ENCODE measurements at regions of chr13 and their contacts with region 1.

Region 1: DNA sequence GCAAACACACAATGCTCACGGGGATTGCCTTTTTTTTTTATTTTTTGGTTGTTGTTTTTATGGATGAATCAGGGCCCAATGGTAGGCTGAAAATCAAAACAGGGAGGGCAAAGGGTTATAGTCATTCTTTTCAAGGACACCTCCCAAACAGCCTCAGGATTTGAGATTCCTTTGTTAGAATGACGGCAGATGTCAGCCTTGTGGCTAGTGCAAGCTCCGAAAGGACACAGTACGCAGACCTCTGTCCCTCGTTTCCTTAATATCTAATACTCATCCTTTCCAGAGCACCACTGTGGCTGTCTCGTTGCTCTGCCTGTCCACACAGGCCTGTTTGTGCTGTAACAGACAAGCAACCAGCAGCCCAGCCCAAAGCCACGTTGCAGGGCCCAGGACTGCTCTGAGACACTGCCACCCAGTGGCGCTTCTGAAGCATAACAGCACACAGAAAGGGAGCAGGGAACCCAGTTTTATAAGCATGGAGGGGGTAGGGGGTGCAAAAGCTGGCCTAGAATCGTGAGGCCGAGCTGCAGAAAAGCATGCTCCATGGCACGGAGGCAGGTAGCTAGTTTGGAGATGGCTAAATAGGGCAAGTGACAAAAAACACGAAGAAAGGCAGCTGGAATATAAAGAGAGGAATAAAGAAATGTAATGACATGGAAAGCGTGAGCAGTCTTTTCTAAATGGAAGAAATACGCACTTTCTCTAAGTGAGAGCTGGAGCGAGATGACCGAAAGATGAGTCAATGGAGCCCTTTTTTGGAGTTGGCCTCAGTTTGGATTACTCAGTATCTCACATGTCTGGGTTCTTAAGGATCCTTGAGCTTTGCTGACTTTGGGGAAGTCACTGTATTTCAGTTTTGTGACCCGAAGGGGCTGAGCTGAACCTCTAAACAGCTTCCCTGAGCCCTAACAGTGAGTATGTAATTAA is 40.7 kb upstream of the MEDAG start:
- DNase-seq: peak; percentile 86
- H3K4me3 ChIP-seq: peak overlapping the region; percentile 21
- CTCF ChIP-seq: peak; percentile 91

Region 2: DNA sequence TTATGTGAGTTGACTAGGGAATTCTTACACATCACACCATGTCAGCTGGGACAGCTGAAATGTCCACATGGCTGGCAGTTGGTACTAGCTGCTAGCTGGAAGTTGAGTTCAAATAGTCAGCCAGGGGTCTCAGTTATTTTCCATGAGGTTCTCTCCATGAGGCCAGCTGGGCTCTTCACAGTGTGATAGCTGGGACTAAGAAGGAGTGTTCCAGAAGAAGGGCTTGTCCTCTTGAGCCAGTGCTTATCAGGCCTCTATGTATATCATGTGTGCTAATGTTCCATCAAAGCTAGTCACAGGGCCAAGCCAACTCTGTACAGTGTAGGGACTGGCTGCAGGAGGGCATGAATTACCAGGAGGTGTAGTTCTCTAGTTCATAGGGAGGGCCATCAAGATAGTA is 235.9 kb before region 1 on chr13:
- CTCF ChIA-PET with region 1: no interaction called
- POLR2A ChIA-PET with region 1: no interaction called
- DNase-seq: no peak
- H3K4me3 ChIP-seq: no peak overlapping the region
- CTCF ChIP-seq: no peak

Region 3: GRCh38 chr13:30676672-30677071 is 188.7 kb before region 1 on chr13:
- CTCF ChIA-PET with region 1: interaction called, 13 read pairs
- POLR2A ChIA-PET with region 1: no interaction called
- DNase-seq: no peak
- H3K4me3 ChIP-seq: no peak overlapping the region
- CTCF ChIP-seq: peak; percentile 44

Region 4: DNA sequence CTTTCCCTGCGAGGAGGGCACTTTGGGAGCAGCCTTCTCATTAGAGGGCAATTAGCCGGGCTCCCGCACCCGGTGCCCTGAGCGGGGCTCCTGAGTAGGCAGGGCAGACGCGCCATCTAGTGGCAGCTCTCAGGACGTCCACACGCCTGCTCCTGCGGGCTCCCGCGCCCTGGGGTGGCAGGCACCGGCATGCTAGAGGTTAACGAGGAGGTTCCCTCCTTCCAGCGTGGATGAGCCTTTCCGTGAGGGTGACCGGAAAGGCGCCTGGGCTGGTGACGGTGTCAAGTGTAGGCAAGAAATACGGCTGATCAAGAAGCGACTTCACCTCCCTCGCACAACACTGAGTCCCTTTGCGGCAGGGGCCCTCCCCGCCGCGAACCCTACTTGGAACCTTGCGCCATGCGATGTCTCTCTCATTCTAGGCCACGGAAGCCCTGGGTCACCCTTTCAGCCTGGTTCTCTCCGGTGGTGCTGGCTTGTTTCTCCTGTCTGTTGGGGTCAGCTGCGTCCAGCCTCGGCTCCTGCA is 62.4 kb before region 1 on chr13:
- CTCF ChIA-PET with region 1: interaction called, 11 read pairs
- POLR2A ChIA-PET with region 1: interaction called, 3 read pairs
- DNase-seq: no peak
- H3K4me3 ChIP-seq: peak overlapping the region; percentile 35
- CTCF ChIP-seq: peak; percentile 96

Region 5: GRCh38 chr13:30847650-30848307 is 17.6 kb before region 1 on chr13:
- CTCF ChIA-PET with region 1: interaction called, 46 read pairs
- POLR2A ChIA-PET with region 1: interaction called, 4 read pairs
- DNase-seq: peak; percentile 99
- H3K4me3 ChIP-seq: peak overlapping the region; percentile 34
- CTCF ChIP-seq: no peak

Region 6: DNA sequence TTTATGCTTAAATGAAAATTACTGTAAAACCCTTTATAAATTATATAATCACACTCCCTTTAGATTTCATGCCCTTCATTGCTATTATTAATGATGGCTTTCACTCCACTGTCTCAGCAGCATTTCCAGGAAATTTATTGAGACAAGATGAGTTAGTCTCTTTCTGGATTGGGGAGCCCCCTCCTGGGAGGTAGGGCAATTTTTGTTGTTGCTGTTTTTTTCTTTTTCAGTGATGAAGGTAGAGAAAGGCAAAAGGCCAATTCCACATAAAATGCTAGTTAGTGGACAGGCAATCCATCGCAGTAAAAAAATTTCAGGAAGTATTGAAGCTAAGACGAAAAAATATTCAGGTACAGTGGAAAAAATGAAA is 147.3 kb after region 1 on chr13:
- CTCF ChIA-PET with region 1: interaction called, 12 read pairs
- POLR2A ChIA-PET with region 1: no interaction called
- DNase-seq: no peak
- H3K4me3 ChIP-seq: no peak overlapping the region
- CTCF ChIP-seq: peak; percentile 52

Measured in AG04449 (cell line).